Heart left ventricle (tissue), 16 donors: ENCODE measurements at regions of chr22 and their contacts with region 1.

Region 1: GRCh38 chr22:19854778-19855503 is at the starts of genes GNB1L and RTL10:
- DNase-seq: peak; percentile 97 to 99 (median 98)
- ATAC-seq: peak; percentile 99
- H3K4me3 ChIP-seq: peak within 1 kb of the TSS; percentile 63 to 97 (median 80)
- H3K27ac ChIP-seq: peak within 1 kb of the TSS; percentile 83 to 96 (median 93)
- H3K4me1 ChIP-seq: peaks cover 0 to 32% (median 24%) of the 10 kb centered on the region in 12 donors
- H3K27me3 ChIP-seq: no peaks in the 10 kb centered on the region
- CTCF ChIP-seq: peak in 5 of 12 donors; percentile 4 to 42 (median 19)
- POLR2A ChIP-seq: peak in 1 of 2 donors; percentile 97
- total RNA-seq, gene GNB1L: 1.9 to 3.7 (median 2.4) TPM
- total RNA-seq, gene RTL10: 5.1 to 11.6 (median 7.7) TPM

Region 2: DNA sequence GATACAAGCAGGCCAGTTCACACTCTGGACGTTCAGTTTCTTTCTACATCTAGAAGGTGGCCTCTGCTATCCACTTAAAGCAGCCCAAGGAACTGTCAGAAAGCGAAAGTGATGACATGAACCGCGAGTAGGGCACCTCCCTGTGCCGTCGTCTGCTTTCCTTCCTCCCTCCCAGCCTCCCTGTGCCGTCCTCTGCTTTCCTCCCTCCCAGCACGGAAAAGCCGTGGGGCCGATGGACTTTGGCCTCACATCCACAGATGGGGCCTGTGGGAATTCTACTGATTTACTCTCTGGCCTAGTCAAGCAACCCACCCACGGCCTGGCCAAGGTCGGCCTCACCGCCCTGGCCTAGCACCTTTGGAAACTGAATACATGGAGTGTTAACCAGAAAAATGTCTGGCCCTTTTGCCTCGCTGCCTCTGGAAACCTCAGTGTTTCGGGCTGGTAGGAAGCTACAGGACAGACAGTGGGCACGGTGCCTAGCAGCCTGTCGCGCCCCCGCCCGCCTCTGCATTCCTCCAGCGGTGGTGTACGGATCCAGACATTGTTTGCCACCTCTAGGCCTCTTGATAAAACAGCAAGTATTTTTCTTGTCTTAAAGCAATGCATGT is 1762.9 kb before region 1 on chr22:
- intact Hi-C with region 1: loop called in 1 of 10 experiments (anchors 10 kb)
- DNase-seq: peak; percentile 72 to 87 (median 83)
- ATAC-seq: peak; percentile 65 to 88 (median 84)
- H3K4me3 ChIP-seq: peak overlapping the region in 11 of 12 donors; percentile 6 to 46 (median 42)
- H3K27ac ChIP-seq: peak overlapping the region; percentile 87 to 97 (median 92)
- H3K4me1 ChIP-seq: peaks cover 2 to 40% (median 19%) of the 10 kb centered on the region in 12 donors
- H3K27me3 ChIP-seq: no peaks in the 10 kb centered on the region
- CTCF ChIP-seq: peak in 5 of 12 donors; percentile 6 to 33 (median 25)
- POLR2A ChIP-seq: peak in 1 of 2 donors; percentile 14

Region 3: GRCh38 chr22:19761500-19762314 is 93.2 kb before region 1 on chr22:
- intact Hi-C with region 1: loop called in 2 of 10 experiments (anchors 5 kb)
- DNase-seq: no peak
- ATAC-seq: no peak
- H3K4me3 ChIP-seq: peak overlapping the region in 3 of 12 donors; percentile 21 to 36 (median 31)
- H3K27ac ChIP-seq: no peak overlapping the region
- H3K4me1 ChIP-seq: peaks cover 0 to 46% (median 16%) of the 10 kb centered on the region in 12 donors
- H3K27me3 ChIP-seq: peaks cover 56 to 91% (median 82%) of the 10 kb centered on the region in 9 donors
- CTCF ChIP-seq: no peak
- POLR2A ChIP-seq: no peak

Region 4: GRCh38 chr22:19775496-19776325 is 79.2 kb before region 1 on chr22:
- intact Hi-C with region 1: no loop called
- DNase-seq: peak in 2 of 5 donors; percentile 15 to 40
- ATAC-seq: no peak
- H3K4me3 ChIP-seq: no peak overlapping the region
- H3K27ac ChIP-seq: no peak overlapping the region
- H3K4me1 ChIP-seq: peaks cover 0 to 19% (median 2%) of the 10 kb centered on the region in 12 donors
- H3K27me3 ChIP-seq: peaks cover 0 to 57% (median 20%) of the 10 kb centered on the region in 9 donors
- CTCF ChIP-seq: no peak
- POLR2A ChIP-seq: no peak

Region 5: DNA sequence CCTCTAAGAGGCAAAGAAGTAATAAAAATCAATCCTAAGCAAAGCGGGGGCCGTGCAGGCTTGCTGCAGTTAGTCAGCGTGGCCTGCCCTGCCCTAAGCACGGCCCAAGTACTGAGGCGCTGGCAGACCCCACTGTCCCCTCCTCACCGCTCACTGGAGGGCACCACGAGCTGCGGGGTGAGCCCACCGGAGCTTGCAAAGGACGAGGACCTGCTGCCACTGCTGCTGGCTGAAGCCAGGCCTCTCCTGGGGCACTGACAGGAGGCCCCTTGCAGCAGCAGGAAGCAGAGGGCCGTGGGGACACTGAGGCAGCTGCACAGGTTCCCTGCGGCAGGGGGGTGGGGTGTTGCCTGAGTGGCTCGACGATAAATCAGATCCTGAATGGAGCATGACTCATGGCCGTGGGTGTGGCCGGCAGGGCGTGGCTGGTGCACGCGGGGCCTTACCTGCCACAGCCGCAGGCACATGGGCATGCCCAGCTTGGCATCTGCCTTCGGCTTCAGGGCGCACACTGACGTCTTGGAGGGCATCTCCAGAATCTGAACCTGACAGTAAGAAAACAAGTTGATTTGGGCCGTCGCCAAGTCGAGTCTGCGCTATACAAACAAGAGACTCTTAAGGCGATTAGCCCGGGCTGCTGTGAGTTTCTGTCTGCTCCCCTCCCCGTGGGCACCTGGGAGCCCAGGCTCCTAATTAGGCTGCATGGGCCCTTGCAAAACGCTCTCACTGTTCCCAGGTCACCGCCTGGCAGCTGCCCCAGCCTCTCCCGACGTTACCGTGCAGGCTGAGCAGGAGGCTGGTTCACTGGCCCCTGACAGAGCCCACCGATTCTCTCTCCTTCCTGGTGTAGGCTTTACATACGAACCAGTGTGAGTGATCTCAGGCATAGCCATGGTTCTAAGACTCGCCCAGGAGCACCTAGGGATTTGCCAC is 48.5 kb before region 1 on chr22:
- intact Hi-C with region 1: loop called in 1 of 10 experiments (anchors 5 kb)
- DNase-seq: peak in 1 of 5 donors; percentile 54
- ATAC-seq: no peak
- H3K4me3 ChIP-seq: no peak overlapping the region
- H3K27ac ChIP-seq: no peak overlapping the region
- H3K4me1 ChIP-seq: peaks cover 0 to 6% (median 0%) of the 10 kb centered on the region in 12 donors
- H3K27me3 ChIP-seq: no peaks in the 10 kb centered on the region
- CTCF ChIP-seq: no peak
- POLR2A ChIP-seq: no peak

Region 6: GRCh38 chr22:19941365-19942082 is 86.6 kb after region 1 on chr22 and contains the starts of genes COMT and TXNRD2:
- intact Hi-C with region 1: loop called in 1 of 10 experiments (anchors 5 kb)
- DNase-seq: peak; percentile 71 to 91 (median 79)
- ATAC-seq: peak; percentile 35 to 91 (median 82)
- H3K4me3 ChIP-seq: peak within 1 kb of the TSS; percentile 65 to 99 (median 87)
- H3K27ac ChIP-seq: peak within 1 kb of the TSS; percentile 88 to 99 (median 94)
- H3K4me1 ChIP-seq: peaks cover 4 to 62% (median 31%) of the 10 kb centered on the region in 12 donors
- H3K27me3 ChIP-seq: no peaks in the 10 kb centered on the region
- CTCF ChIP-seq: no peak
- POLR2A ChIP-seq: peak in 1 of 2 donors; percentile 32
- total RNA-seq, gene COMT: 69.7 to 195 (median 119) TPM
- total RNA-seq, gene TXNRD2: 23.5 to 42.5 (median 33.5) TPM

Region 7: DNA sequence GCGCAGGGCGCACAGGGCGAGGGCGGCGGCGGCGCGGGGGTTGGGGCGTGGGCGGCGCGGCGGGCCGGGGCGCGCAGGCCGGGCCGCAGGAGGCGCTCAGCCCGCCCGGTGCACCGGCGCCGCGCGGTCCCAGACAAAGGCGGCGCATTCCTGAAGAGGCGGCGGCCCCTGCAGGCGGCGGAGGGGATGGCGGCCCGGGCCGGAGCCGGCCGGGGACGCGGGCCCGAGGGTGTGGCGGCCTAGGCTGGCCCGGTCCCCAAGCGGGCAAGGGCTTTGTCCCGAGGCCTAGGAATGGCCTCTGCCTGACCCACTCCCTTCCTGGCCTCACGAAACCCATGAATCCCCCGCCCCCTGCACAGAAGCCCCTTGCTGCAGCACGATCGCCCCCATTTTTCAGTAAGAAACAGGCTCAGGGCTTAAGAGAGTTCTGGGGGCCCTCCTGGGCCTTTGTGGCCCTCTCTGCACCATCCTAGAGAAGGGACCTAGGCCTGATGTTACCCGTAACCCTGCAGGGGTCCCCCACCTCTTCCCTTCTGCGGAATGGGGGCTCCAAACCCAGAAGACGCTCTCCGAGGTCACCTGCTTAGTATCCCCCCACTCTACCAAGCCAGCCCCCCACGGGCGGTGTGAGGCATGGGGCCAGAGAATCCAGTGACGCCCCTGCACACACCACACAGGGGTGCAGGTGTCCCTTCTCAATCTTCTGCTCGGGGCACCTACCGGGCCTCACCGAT is 413.5 kb after region 1 on chr22 and contains the start of gene RTN4R:
- intact Hi-C with region 1: no loop called
- DNase-seq: peak; percentile 53 to 82 (median 67)
- ATAC-seq: peak; percentile 51 to 92 (median 83)
- H3K4me3 ChIP-seq: peak within 1 kb of the TSS in 11 of 12 donors; percentile 40 to 79 (median 54)
- H3K27ac ChIP-seq: peak within 1 kb of the TSS in 5 of 12 donors; percentile 20 to 65 (median 55)
- H3K4me1 ChIP-seq: peaks cover 0 to 17% (median 10%) of the 10 kb centered on the region in 12 donors
- H3K27me3 ChIP-seq: peaks cover 0 to 8% (median 0%) of the 10 kb centered on the region in 9 donors
- CTCF ChIP-seq: peak; percentile 38 to 93 (median 70)
- POLR2A ChIP-seq: no peak
- total RNA-seq, gene RTN4R: 0.53 to 2.6 (median 1.4) TPM